Heart right ventricle (tissue), 16 donors: ENCODE measurements at regions of chr9 and their contacts with region 1.

Region 1: DNA sequence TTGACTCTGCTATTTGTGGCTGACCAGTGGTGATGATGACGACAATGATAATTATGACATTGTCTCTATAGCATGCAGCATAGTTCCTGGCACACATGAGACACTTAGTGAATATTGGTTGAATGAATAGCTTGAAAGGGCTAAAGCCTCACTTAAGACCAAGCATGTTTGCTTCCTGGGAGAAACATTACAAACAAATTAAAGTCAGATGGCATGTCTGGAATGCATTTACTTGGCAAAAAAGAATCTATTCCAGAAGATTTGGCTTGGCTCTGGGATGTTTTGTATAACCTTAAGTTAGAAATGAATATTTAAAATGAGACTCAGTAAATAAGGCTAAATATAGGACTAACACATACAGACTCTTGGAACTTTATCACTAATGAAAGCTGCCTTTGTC is 21.6 kb downstream of the GAS1 start:
- DNase-seq: no peak
- ATAC-seq: no peak
- H3K4me3 ChIP-seq: no peak overlapping the region
- H3K27ac ChIP-seq: no peak overlapping the region
- H3K4me1 ChIP-seq: no peaks in the 10 kb centered on the region
- H3K27me3 ChIP-seq: peaks cover 0 to 20% (median 7%) of the 10 kb centered on the region in 7 donors
- CTCF ChIP-seq: no peak

Region 2: GRCh38 chr9:86843206-86843605 is 82.5 kb before region 1 on chr9:
- intact Hi-C with region 1: loop called in 1 of 10 experiments (anchors 10 kb)
- DNase-seq: peak in 1 of 2 donors; percentile 11
- ATAC-seq: peak in 1 of 8 donors; percentile 38
- H3K4me3 ChIP-seq: no peak overlapping the region
- H3K27ac ChIP-seq: no peak overlapping the region
- H3K4me1 ChIP-seq: peaks cover 0 to 14% (median 0%) of the 10 kb centered on the region in 9 donors
- H3K27me3 ChIP-seq: peaks cover 0 to 11% (median 0%) of the 10 kb centered on the region in 7 donors
- CTCF ChIP-seq: no peak

Region 3: GRCh38 chr9:86968258-86968920 is 42.7 kb after region 1 on chr9:
- intact Hi-C with region 1: no loop called
- DNase-seq: no peak
- ATAC-seq: peak in 3 of 8 donors; percentile 35 to 56 (median 52)
- H3K4me3 ChIP-seq: no peak overlapping the region
- H3K27ac ChIP-seq: peak overlapping the region in 1 of 10 donors; percentile 35
- H3K4me1 ChIP-seq: peaks cover 0 to 4% (median 0%) of the 10 kb centered on the region in 9 donors
- H3K27me3 ChIP-seq: peaks cover 0 to 18% (median 4%) of the 10 kb centered on the region in 7 donors
- CTCF ChIP-seq: no peak

Region 4: DNA sequence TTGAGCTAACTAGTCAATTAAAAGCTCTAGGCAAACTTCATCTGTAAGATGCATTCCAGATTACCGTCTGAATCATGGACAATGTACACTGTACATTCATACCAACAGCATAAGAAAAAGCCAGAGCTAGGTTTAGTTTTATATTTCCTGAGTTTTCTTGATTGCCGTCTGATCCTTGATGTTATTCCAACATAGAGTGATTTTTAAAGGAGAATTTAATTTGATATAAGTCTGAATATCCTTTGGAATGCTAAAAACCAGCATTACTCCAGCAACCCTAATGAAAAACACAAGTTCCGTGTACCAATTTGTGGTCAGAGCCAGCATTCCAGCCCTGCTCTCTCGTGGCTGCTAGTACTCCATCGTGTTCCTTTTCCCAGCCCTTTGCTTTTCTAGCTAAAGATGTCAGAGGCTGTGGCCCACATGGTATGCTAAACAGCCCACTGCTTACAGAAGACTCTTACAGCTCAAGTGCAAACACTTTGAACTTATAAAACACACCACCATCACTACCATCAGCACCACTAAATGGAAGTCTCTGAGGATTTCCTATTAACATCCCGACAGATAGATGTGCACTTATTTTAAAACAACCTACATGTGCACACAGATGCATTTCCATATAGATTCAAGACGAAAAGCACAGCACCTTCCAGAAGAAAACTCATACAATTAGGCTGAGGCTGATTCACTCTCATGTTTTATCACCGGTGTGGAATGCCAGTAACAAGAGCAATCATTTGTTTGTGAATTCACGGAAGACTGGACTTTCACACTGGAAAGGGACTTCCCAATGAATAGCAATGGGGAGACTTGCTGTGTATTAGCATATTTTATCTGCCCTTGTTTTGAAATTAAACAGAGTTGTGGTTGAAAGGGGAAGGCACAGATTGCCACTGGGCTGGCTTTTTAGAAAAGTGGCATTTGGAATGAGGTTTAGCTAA is 268.5 kb after region 1 on chr9:
- intact Hi-C with region 1: no loop called
- DNase-seq: no peak
- ATAC-seq: peak in 1 of 8 donors; percentile 17
- H3K4me3 ChIP-seq: no peak overlapping the region
- H3K27ac ChIP-seq: no peak overlapping the region
- H3K4me1 ChIP-seq: peaks cover 0 to 7% (median 0%) of the 10 kb centered on the region in 9 donors
- H3K27me3 ChIP-seq: peaks cover 0 to 30% (median 8%) of the 10 kb centered on the region in 7 donors
- CTCF ChIP-seq: no peak